ENCODE measurements at regions of chr15 and their contacts with region 1.

Region 1: GRCh38 chr15:96514607-96515285 is 184.2 kb downstream of the NR2F2 start:
- DNase-seq: no peak
- H3K4me3 ChIP-seq: no peak overlapping the region
- H3K27ac ChIP-seq: no peak overlapping the region
- H3K4me1 ChIP-seq: no peaks in the 10 kb centered on the region
- H3K27me3 ChIP-seq: no peaks in the 10 kb centered on the region
- CTCF ChIP-seq: no peak
- POLR2A ChIP-seq: no peak

Region 2: GRCh38 chr15:96574782-96575181 is 60.0 kb after region 1 on chr15:
- intact Hi-C with region 1: loop called (anchors 10 kb)
- DNase-seq: no peak
- H3K4me3 ChIP-seq: no peak overlapping the region
- H3K27ac ChIP-seq: no peak overlapping the region
- H3K4me1 ChIP-seq: no peaks in the 10 kb centered on the region
- H3K27me3 ChIP-seq: no peaks in the 10 kb centered on the region
- CTCF ChIP-seq: no peak
- POLR2A ChIP-seq: no peak

Measured in prostate gland (tissue), 2 donors.